ENCODE measurements at regions of chr14 and their contacts with region 1.

Region 1: GRCh38 chr14:70663611-70664508 is 22.1 kb downstream of the TTC9 start:
- DNase-seq: no peak
- ATAC-seq: no peak
- H3K4me3 ChIP-seq: no peak overlapping the region
- H3K4me3 Mint-ChIP-seq: peak overlapping the region in 4 of 10 donors; percentile 61 to 84 (median 72)
- H3K27ac ChIP-seq: no peak overlapping the region
- H3K27ac Mint-ChIP-seq: peak overlapping the region in 8 of 9 donors; percentile 81 to 99 (median 96)
- H3K4me1 ChIP-seq: peaks cover 33 to 83% of the 10 kb centered on the region in 2 donors
- H3K4me1 Mint-ChIP-seq: peaks cover 62 to 95% (median 83%) of the 10 kb centered on the region in 7 donors
- H3K27me3 ChIP-seq: no peaks in the 10 kb centered on the region
- H3K27me3 Mint-ChIP-seq: no peaks in the 10 kb centered on the region

Region 2: DNA sequence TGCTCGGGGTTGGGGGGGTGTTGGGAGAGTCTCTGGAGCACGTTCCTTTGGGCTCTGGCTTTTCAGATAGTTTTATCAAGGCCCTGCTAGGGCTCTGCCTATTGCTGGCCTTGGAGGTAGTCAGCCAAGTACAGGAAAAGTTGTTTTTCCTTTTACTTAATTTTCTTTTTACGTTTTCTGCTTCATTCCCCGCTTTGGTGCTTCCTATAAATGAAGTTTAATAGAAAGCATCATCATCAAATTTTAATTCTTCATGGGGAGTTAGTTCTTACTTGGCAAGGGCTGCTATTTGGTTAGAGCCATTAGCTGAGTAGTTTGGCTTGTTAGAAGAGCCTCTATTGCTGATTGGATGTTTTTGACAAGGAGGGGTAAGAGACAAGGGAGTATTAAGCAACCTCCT is 227.0 kb before region 1 on chr14:
- CTCF ChIA-PET with region 1: no interaction called
- POLR2A ChIA-PET with region 1: no interaction called
- intact Hi-C with region 1: no loop called
- DNase-seq: no peak
- ATAC-seq: no peak
- H3K4me3 ChIP-seq: no peak overlapping the region
- H3K4me3 Mint-ChIP-seq: no peak overlapping the region
- H3K27ac ChIP-seq: no peak overlapping the region
- H3K27ac Mint-ChIP-seq: no peak overlapping the region
- H3K4me1 ChIP-seq: no peaks in the 10 kb centered on the region
- H3K4me1 Mint-ChIP-seq: no peaks in the 10 kb centered on the region
- H3K27me3 ChIP-seq: no peaks in the 10 kb centered on the region
- H3K27me3 Mint-ChIP-seq: peaks cover 0 to 40% (median 29%) of the 10 kb centered on the region in 5 donors

Region 3: GRCh38 chr14:70600382-70601157 is 63.3 kb before region 1 on chr14 and contains the start of gene MED6:
- CTCF ChIA-PET with region 1: no interaction called
- POLR2A ChIA-PET with region 1: interaction called, 5 read pairs
- intact Hi-C with region 1: loop called in 1 of 2 experiments (anchors 1 kb)
- DNase-seq: peak; percentile 78 to 94 (median 91)
- ATAC-seq: peak; percentile 100
- H3K4me3 ChIP-seq: peak within 1 kb of the TSS; percentile 96
- H3K4me3 Mint-ChIP-seq: peak within 1 kb of the TSS; percentile 97 to 100 (median 99)
- H3K27ac ChIP-seq: peak within 1 kb of the TSS; percentile 91
- H3K27ac Mint-ChIP-seq: peak within 1 kb of the TSS; percentile 96 to 99 (median 98)
- H3K4me1 ChIP-seq: peaks cover 11 to 14% of the 10 kb centered on the region in 2 donors
- H3K4me1 Mint-ChIP-seq: peaks cover 15 to 47% (median 40%) of the 10 kb centered on the region in 7 donors
- H3K27me3 ChIP-seq: no peaks in the 10 kb centered on the region
- H3K27me3 Mint-ChIP-seq: peaks cover 0 to 22% (median 6%) of the 10 kb centered on the region in 5 donors
- total RNA-seq, gene MED6: 53.4 to 97.0 (median 67.1) TPM

Region 4: GRCh38 chr14:70622111-70622712 is 41.6 kb before region 1 on chr14:
- CTCF ChIA-PET with region 1: interaction called, 7 read pairs
- POLR2A ChIA-PET with region 1: interaction called, 3 read pairs
- intact Hi-C with region 1: loop called (anchors 1 to 2 kb)
- DNase-seq: peak in 8 of 9 donors; percentile 42 to 66 (median 56)
- ATAC-seq: peak; percentile 85
- H3K4me3 ChIP-seq: no peak overlapping the region
- H3K4me3 Mint-ChIP-seq: peak overlapping the region in 1 of 10 donors; percentile 11
- H3K27ac ChIP-seq: no peak overlapping the region
- H3K27ac Mint-ChIP-seq: peak overlapping the region in 3 of 9 donors; percentile 2 to 29 (median 17)
- H3K4me1 ChIP-seq: no peaks in the 10 kb centered on the region
- H3K4me1 Mint-ChIP-seq: peaks cover 0 to 10% (median 6%) of the 10 kb centered on the region in 7 donors
- H3K27me3 ChIP-seq: no peaks in the 10 kb centered on the region
- H3K27me3 Mint-ChIP-seq: peaks cover 0 to 20% (median 0%) of the 10 kb centered on the region in 5 donors

Region 5: GRCh38 chr14:70680748-70681147 is 16.9 kb after region 1 on chr14:
- CTCF ChIA-PET with region 1: interaction called, 3 read pairs
- POLR2A ChIA-PET with region 1: interaction called, 11 read pairs
- intact Hi-C with region 1: loop called in 1 of 2 experiments (anchors 2 kb)
- DNase-seq: no peak
- ATAC-seq: no peak
- H3K4me3 ChIP-seq: no peak overlapping the region
- H3K4me3 Mint-ChIP-seq: no peak overlapping the region
- H3K27ac ChIP-seq: no peak overlapping the region
- H3K27ac Mint-ChIP-seq: no peak overlapping the region
- H3K4me1 ChIP-seq: no peaks in the 10 kb centered on the region
- H3K4me1 Mint-ChIP-seq: peaks cover 0 to 11% (median 0%) of the 10 kb centered on the region in 7 donors
- H3K27me3 ChIP-seq: no peaks in the 10 kb centered on the region
- H3K27me3 Mint-ChIP-seq: no peaks in the 10 kb centered on the region

Region 6: GRCh38 chr14:70707138-70708038 is 43.5 kb after region 1 on chr14:
- CTCF ChIA-PET with region 1: interaction called, 7 read pairs
- POLR2A ChIA-PET with region 1: interaction called, 4 read pairs
- intact Hi-C with region 1: loop called in 1 of 2 experiments (anchors 2 kb)
- DNase-seq: no peak
- ATAC-seq: no peak
- H3K4me3 ChIP-seq: no peak overlapping the region
- H3K4me3 Mint-ChIP-seq: no peak overlapping the region
- H3K27ac ChIP-seq: no peak overlapping the region
- H3K27ac Mint-ChIP-seq: no peak overlapping the region
- H3K4me1 ChIP-seq: no peaks in the 10 kb centered on the region
- H3K4me1 Mint-ChIP-seq: peaks cover 0 to 4% (median 0%) of the 10 kb centered on the region in 7 donors
- H3K27me3 ChIP-seq: no peaks in the 10 kb centered on the region
- H3K27me3 Mint-ChIP-seq: peaks cover 0 to 12% (median 0%) of the 10 kb centered on the region in 5 donors

Region 7: GRCh38 chr14:70714055-70714621 is 50.3 kb after region 1 on chr14:
- CTCF ChIA-PET with region 1: interaction called, 5 read pairs
- POLR2A ChIA-PET with region 1: interaction called, 3 read pairs
- intact Hi-C with region 1: loop called (anchors 1 to 2 kb)
- DNase-seq: peak in 7 of 9 donors; percentile 24 to 62 (median 43)
- ATAC-seq: no peak
- H3K4me3 ChIP-seq: no peak overlapping the region
- H3K4me3 Mint-ChIP-seq: peak overlapping the region in 2 of 10 donors; percentile 38 to 53
- H3K27ac ChIP-seq: no peak overlapping the region
- H3K27ac Mint-ChIP-seq: no peak overlapping the region
- H3K4me1 ChIP-seq: peaks cover 2 to 4% of the 10 kb centered on the region in 2 donors
- H3K4me1 Mint-ChIP-seq: peaks cover 3 to 7% (median 5%) of the 10 kb centered on the region in 7 donors
- H3K27me3 ChIP-seq: no peaks in the 10 kb centered on the region
- H3K27me3 Mint-ChIP-seq: peaks cover 0 to 9% (median 4%) of the 10 kb centered on the region in 5 donors

Measured in naive thymus-derived CD4-positive, alpha-beta T cell (primary cell).